CD4-positive, alpha-beta T cell (primary cell): ENCODE measurements at regions of chr10 and their contacts with region 1.

Region 1: GRCh38 chr10:63083904-63084689 is 49.0 kb upstream of the NRBF2 start:
- DNase-seq: peak in 13 of 14 experiments; percentile 2 to 74 (median 24)
- ATAC-seq: peak; percentile 71
- H3K4me3 ChIP-seq: no peak overlapping the region
- H3K4me3 Mint-ChIP-seq: no peak overlapping the region
- H3K27ac ChIP-seq: no peak overlapping the region
- H3K27ac Mint-ChIP-seq: no peak overlapping the region
- H3K4me1 ChIP-seq: no peaks in the 10 kb centered on the region
- H3K4me1 Mint-ChIP-seq: no peaks in the 10 kb centered on the region
- H3K27me3 ChIP-seq: peaks cover 0 to 2% of the 10 kb centered on the region in 2 experiments
- H3K27me3 Mint-ChIP-seq: peaks cover 14% of the 10 kb centered on the region
- CTCF ChIP-seq: peak; percentile 80

Region 2: DNA sequence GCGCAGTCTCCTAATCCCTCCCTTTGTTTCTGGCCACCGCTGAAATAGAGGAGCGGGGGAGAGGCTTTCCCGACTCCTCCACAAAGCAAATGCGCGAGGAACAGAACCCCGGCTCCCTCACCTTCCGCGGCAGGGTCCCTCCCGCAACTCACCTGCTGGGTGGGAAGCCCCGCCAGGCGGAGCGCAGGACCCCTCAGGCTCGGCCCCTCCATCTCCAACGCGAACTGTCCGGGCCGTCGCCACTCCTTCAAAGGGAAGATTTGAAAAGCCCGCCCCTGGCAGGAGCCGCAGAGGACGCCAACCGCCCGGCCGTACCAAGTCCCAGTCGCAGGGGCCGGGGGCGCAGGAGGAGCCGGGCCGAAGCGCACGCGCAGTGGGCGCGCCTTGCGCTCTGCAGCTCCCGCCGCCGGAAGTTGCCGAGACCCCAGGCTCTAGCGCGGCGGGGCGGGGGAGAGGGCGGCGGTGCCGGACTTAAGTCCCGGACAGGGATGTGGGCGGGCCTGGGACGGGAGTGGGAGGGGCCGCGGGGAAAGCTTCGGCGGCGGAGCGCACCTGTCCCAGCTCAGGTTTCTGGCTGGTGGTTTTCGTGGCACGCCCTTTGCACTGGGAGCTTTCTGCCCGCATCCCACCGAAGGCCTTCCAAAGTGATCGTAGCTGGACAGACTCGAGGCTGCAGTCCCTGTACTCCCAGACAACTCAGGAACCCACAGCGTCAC is 815.5 kb before region 1 on chr10 and contains the start of gene RTKN2:
- CTCF ChIA-PET with region 1: no interaction called
- POLR2A ChIA-PET with region 1: no interaction called
- intact Hi-C with region 1: loop called in 1 of 2 experiments (anchors 10 kb)
- DNase-seq: peak; percentile 40 to 87 (median 58)
- ATAC-seq: peak; percentile 83
- H3K4me3 ChIP-seq: peak within 1 kb of the TSS; percentile 71
- H3K4me3 Mint-ChIP-seq: peak within 1 kb of the TSS; percentile 90
- H3K27ac ChIP-seq: no peak within 1 kb of the TSS
- H3K27ac Mint-ChIP-seq: no peak within 1 kb of the TSS
- H3K4me1 ChIP-seq: peaks cover 16% of the 10 kb centered on the region
- H3K4me1 Mint-ChIP-seq: peaks cover 22% of the 10 kb centered on the region
- H3K27me3 ChIP-seq: no peaks in the 10 kb centered on the region
- H3K27me3 Mint-ChIP-seq: peaks cover 27% of the 10 kb centered on the region
- CTCF ChIP-seq: no peak
- total RNA-seq, gene RTKN2: 3.7 to 3.9 TPM

Region 3: DNA sequence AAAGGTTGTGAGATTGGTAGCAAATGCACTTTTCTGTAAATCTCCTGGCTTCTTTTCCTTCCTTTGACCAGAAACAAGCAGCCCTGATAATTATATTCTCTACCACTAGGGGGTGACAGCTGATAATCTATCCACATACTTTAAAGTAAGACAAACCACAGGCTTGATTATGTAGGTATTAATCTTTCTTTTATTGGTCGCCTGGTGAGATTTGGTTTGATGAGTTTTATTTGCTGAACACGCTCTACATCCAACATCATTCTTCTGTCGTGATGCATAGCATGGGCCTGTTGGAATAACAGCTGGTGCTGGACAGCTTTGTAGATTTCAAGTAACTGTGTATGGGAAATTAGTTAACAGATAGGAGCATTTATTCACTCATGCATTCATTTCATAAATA is 646.4 kb before region 1 on chr10:
- CTCF ChIA-PET with region 1: interaction called, 14 read pairs
- POLR2A ChIA-PET with region 1: no interaction called
- intact Hi-C with region 1: loop called (anchors 1 to 2 kb)
- DNase-seq: peak in 5 of 14 experiments; percentile 0 to 74 (median 73)
- ATAC-seq: peak; percentile 59
- H3K4me3 ChIP-seq: no peak overlapping the region
- H3K4me3 Mint-ChIP-seq: no peak overlapping the region
- H3K27ac ChIP-seq: no peak overlapping the region
- H3K27ac Mint-ChIP-seq: no peak overlapping the region
- H3K4me1 ChIP-seq: no peaks in the 10 kb centered on the region
- H3K4me1 Mint-ChIP-seq: no peaks in the 10 kb centered on the region
- H3K27me3 ChIP-seq: no peaks in the 10 kb centered on the region
- H3K27me3 Mint-ChIP-seq: peaks cover 7% of the 10 kb centered on the region
- CTCF ChIP-seq: peak; percentile 83

Region 4: DNA sequence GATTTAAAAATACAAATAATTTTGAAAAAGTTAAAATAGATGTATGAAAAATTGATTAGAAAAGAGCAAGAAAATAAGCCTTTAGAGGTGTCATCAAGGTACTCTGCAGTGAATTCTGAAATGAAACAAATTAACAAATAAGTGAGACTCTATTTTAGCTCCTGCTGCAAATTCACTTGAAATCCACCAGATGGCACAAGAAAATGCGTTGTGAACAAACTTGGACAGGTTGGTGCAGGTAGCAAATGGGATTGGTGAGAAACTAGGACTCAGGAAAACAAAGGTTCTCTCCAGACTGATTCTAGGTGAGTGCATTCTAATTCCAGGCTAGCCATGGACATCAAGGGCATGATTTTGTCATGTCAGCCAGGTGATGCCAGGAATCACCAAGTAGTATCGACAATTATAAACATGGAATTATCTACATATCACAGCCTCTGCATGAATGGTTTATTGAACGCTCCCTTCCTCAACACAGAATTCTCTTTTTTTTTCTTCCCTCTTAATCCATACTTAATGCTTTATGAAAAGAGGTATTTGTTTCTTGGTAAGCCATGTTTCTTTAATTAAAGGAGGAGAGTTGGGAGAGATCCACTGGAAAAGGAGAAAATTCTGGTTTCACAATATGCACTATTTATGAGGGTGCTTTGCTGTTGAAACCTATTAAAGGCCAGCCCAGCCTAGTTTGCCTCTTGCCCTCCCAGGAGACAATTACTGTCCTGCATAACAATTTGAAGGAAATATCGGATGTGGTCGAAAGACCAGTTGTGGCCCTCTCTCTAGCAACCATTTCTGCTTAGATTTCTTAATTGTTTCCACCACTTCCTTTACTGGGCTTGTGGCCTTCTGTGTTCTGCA is 591.9 kb before region 1 on chr10:
- CTCF ChIA-PET with region 1: no interaction called
- POLR2A ChIA-PET with region 1: no interaction called
- intact Hi-C with region 1: loop called (anchors 1 to 2 kb)
- DNase-seq: peak in 3 of 14 experiments; percentile 25 to 57 (median 52)
- ATAC-seq: no peak
- H3K4me3 ChIP-seq: no peak overlapping the region
- H3K4me3 Mint-ChIP-seq: no peak overlapping the region
- H3K27ac ChIP-seq: no peak overlapping the region
- H3K27ac Mint-ChIP-seq: no peak overlapping the region
- H3K4me1 ChIP-seq: no peaks in the 10 kb centered on the region
- H3K4me1 Mint-ChIP-seq: peaks cover 4% of the 10 kb centered on the region
- H3K27me3 ChIP-seq: no peaks in the 10 kb centered on the region
- H3K27me3 Mint-ChIP-seq: peaks cover 18% of the 10 kb centered on the region
- CTCF ChIP-seq: peak; percentile 63

Region 5: GRCh38 chr10:62594093-62594520 is 490.0 kb before region 1 on chr10:
- CTCF ChIA-PET with region 1: interaction called, 3 read pairs
- POLR2A ChIA-PET with region 1: no interaction called
- intact Hi-C with region 1: loop called (anchors 1 to 2 kb)
- DNase-seq: peak; percentile 14 to 74 (median 38)
- ATAC-seq: peak; percentile 65
- H3K4me3 ChIP-seq: no peak overlapping the region
- H3K4me3 Mint-ChIP-seq: no peak overlapping the region
- H3K27ac ChIP-seq: no peak overlapping the region
- H3K27ac Mint-ChIP-seq: no peak overlapping the region
- H3K4me1 ChIP-seq: no peaks in the 10 kb centered on the region
- H3K4me1 Mint-ChIP-seq: no peaks in the 10 kb centered on the region
- H3K27me3 ChIP-seq: no peaks in the 10 kb centered on the region
- H3K27me3 Mint-ChIP-seq: no peaks in the 10 kb centered on the region
- CTCF ChIP-seq: peak; percentile 93

Region 6: DNA sequence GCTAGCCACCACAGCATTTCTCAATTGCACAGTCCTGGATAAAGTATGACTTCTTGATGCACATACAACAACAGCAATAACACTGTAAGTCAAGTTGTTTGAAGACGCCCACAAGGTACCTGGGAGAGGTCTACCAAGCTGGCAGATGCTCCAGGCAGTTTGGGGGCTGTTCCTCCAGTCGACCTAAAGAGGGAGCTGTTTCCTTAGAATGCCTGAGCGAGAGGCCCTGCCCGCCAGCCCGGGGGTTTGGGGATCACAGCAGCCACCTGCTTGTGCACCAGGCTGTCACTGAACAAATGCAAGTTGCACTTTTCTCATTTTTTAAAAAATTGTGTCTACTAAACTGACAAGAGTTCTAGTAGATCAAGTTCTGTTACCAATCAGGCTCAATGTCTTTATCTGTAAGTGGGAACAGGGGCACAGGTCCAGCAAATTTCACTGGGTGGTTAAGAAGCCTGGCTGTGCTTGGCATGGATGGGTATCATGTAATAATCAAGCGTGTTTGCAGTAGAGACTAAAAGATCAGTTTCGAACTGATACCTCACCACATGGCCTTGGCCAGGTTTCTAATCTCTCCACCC is 473.4 kb before region 1 on chr10:
- CTCF ChIA-PET with region 1: interaction called, 8 read pairs
- POLR2A ChIA-PET with region 1: interaction called, 3 read pairs
- intact Hi-C with region 1: loop called (anchors 5 kb)
- DNase-seq: peak; percentile 48 to 86 (median 62)
- ATAC-seq: peak; percentile 99
- H3K4me3 ChIP-seq: no peak overlapping the region
- H3K4me3 Mint-ChIP-seq: no peak overlapping the region
- H3K27ac ChIP-seq: no peak overlapping the region
- H3K27ac Mint-ChIP-seq: no peak overlapping the region
- H3K4me1 ChIP-seq: peaks cover 8% of the 10 kb centered on the region
- H3K4me1 Mint-ChIP-seq: peaks cover 4% of the 10 kb centered on the region
- H3K27me3 ChIP-seq: no peaks in the 10 kb centered on the region
- H3K27me3 Mint-ChIP-seq: peaks cover 12% of the 10 kb centered on the region
- CTCF ChIP-seq: peak; percentile 83

Region 7: GRCh38 chr10:62826273-62826672 is 257.8 kb before region 1 on chr10:
- CTCF ChIA-PET with region 1: no interaction called
- POLR2A ChIA-PET with region 1: no interaction called
- intact Hi-C with region 1: loop called in 1 of 2 experiments (anchors 10 kb)
- DNase-seq: no peak
- ATAC-seq: no peak
- H3K4me3 ChIP-seq: no peak overlapping the region
- H3K4me3 Mint-ChIP-seq: no peak overlapping the region
- H3K27ac ChIP-seq: no peak overlapping the region
- H3K27ac Mint-ChIP-seq: no peak overlapping the region
- H3K4me1 ChIP-seq: no peaks in the 10 kb centered on the region
- H3K4me1 Mint-ChIP-seq: no peaks in the 10 kb centered on the region
- H3K27me3 ChIP-seq: peaks cover 1 to 4% of the 10 kb centered on the region in 2 experiments
- H3K27me3 Mint-ChIP-seq: peaks cover 25% of the 10 kb centered on the region
- CTCF ChIP-seq: no peak

Region 8: DNA sequence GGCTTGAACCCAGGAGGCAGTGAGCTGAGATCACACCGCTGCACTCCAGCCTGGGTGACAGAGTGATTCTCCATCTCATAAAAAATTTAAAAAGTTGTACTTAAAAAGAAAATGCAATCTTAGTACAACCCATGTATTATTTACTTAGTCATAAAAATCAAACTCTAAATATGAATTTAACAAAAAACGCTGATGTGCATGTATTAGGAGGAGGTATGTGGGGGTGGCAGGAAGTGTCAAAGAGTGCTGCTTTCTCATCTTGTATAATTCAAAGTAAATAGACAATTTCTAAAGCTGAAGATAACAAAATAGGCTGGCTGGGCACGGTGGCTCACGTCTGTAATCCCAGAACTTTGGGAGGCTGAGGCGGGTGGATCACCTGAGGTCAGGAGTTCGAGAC is 32.0 kb before region 1 on chr10:
- CTCF ChIA-PET with region 1: no interaction called
- POLR2A ChIA-PET with region 1: no interaction called
- intact Hi-C with region 1: no loop called
- DNase-seq: no peak
- ATAC-seq: no peak
- H3K4me3 ChIP-seq: no peak overlapping the region
- H3K4me3 Mint-ChIP-seq: no peak overlapping the region
- H3K27ac ChIP-seq: no peak overlapping the region
- H3K27ac Mint-ChIP-seq: no peak overlapping the region
- H3K4me1 ChIP-seq: no peaks in the 10 kb centered on the region
- H3K4me1 Mint-ChIP-seq: no peaks in the 10 kb centered on the region
- H3K27me3 ChIP-seq: no peaks in the 10 kb centered on the region
- H3K27me3 Mint-ChIP-seq: peaks cover 27% of the 10 kb centered on the region
- CTCF ChIP-seq: no peak

Region 9: GRCh38 chr10:63094405-63094804 is 10.3 kb after region 1 on chr10:
- CTCF ChIA-PET with region 1: no interaction called
- POLR2A ChIA-PET with region 1: no interaction called
- intact Hi-C with region 1: no loop called
- DNase-seq: no peak
- ATAC-seq: no peak
- H3K4me3 ChIP-seq: no peak overlapping the region
- H3K4me3 Mint-ChIP-seq: no peak overlapping the region
- H3K27ac ChIP-seq: no peak overlapping the region
- H3K27ac Mint-ChIP-seq: no peak overlapping the region
- H3K4me1 ChIP-seq: no peaks in the 10 kb centered on the region
- H3K4me1 Mint-ChIP-seq: no peaks in the 10 kb centered on the region
- H3K27me3 ChIP-seq: peaks cover 0 to 10% of the 10 kb centered on the region in 2 experiments
- H3K27me3 Mint-ChIP-seq: peaks cover 15% of the 10 kb centered on the region
- CTCF ChIP-seq: no peak

Region 10: GRCh38 chr10:63120554-63120953 is 36.5 kb after region 1 on chr10:
- CTCF ChIA-PET with region 1: no interaction called
- POLR2A ChIA-PET with region 1: no interaction called
- intact Hi-C with region 1: no loop called
- DNase-seq: no peak
- ATAC-seq: no peak
- H3K4me3 ChIP-seq: no peak overlapping the region
- H3K4me3 Mint-ChIP-seq: no peak overlapping the region
- H3K27ac ChIP-seq: no peak overlapping the region
- H3K27ac Mint-ChIP-seq: no peak overlapping the region
- H3K4me1 ChIP-seq: no peaks in the 10 kb centered on the region
- H3K4me1 Mint-ChIP-seq: no peaks in the 10 kb centered on the region
- H3K27me3 ChIP-seq: peaks cover 0 to 3% of the 10 kb centered on the region in 2 experiments
- H3K27me3 Mint-ChIP-seq: peaks cover 8% of the 10 kb centered on the region
- CTCF ChIP-seq: no peak